ENCODE measurements at regions of chr14 and their contacts with region 1.

Region 1: GRCh38 chr14:64421166-64421565 is 33.0 kb downstream of the MTHFD1 start:
- DNase-seq: no peak
- H3K4me3 ChIP-seq: no peak overlapping the region
- H3K27ac ChIP-seq: no peak overlapping the region
- H3K4me1 ChIP-seq: no peaks in the 10 kb centered on the region
- H3K27me3 ChIP-seq: no peaks in the 10 kb centered on the region
- CTCF ChIP-seq: no peak
- EP300 ChIP-seq: no peak
- POLR2A ChIP-seq: no peak

Region 2: GRCh38 chr14:62943202-62943601 is 1478.0 kb before region 1 on chr14:
- intact Hi-C with region 1: loop called in 1 of 4 experiments (anchors 5 kb)
- DNase-seq: no peak
- H3K4me3 ChIP-seq: no peak overlapping the region
- H3K27ac ChIP-seq: no peak overlapping the region
- H3K4me1 ChIP-seq: no peaks in the 10 kb centered on the region
- H3K27me3 ChIP-seq: no peaks in the 10 kb centered on the region
- CTCF ChIP-seq: no peak
- EP300 ChIP-seq: no peak
- POLR2A ChIP-seq: no peak

Region 3: GRCh38 chr14:64800000-64800399 is 378.8 kb after region 1 on chr14:
- intact Hi-C with region 1: no loop called
- DNase-seq: no peak
- H3K4me3 ChIP-seq: no peak overlapping the region
- H3K27ac ChIP-seq: no peak overlapping the region
- H3K4me1 ChIP-seq: no peaks in the 10 kb centered on the region
- H3K27me3 ChIP-seq: no peaks in the 10 kb centered on the region
- CTCF ChIP-seq: no peak
- EP300 ChIP-seq: no peak
- POLR2A ChIP-seq: no peak

Measured in ovary (tissue), 10 donors.